Activated CD4-positive, alpha-beta memory T cell treated with anti-CD3 and anti-CD28 coated beads for 36 hours (primary cell): ENCODE measurements at regions of chr4 and their contacts with region 1.

Region 1: GRCh38 chr4:119041951-119042560 is 93.6 kb upstream of the MYOZ2 start:
- DNase-seq: peak; percentile 63
- H3K4me3 Mint-ChIP-seq: no peak overlapping the region
- H3K27ac Mint-ChIP-seq: no peak overlapping the region
- H3K4me1 Mint-ChIP-seq: peaks cover 11% of the 10 kb centered on the region
- H3K27me3 Mint-ChIP-seq: peaks cover 2% of the 10 kb centered on the region

Region 2: DNA sequence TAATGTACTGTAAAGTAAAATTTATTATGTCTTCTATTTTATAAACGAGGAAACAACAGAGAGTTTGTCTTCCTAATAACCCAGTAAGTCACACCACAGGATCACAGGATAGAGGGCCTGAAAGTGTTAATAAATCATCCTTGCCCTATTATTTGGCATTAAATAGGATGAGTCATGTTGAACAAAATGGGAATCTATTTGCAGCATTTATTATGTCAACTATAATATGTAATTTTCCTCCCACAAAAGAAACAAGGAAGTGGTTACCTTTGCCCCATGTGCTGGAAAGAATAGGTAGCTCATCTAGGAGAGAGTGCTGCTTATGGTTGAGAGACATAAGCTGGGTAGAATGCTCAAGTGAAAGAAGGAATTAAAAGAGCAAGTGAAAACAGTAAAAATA is 1245.4 kb before region 1 on chr4:
- CTCF ChIA-PET with region 1: no interaction called
- POLR2A ChIA-PET with region 1: no interaction called
- intact Hi-C with region 1: no loop called
- DNase-seq: no peak
- H3K4me3 Mint-ChIP-seq: no peak overlapping the region
- H3K27ac Mint-ChIP-seq: no peak overlapping the region
- H3K4me1 Mint-ChIP-seq: no peaks in the 10 kb centered on the region
- H3K27me3 Mint-ChIP-seq: no peaks in the 10 kb centered on the region

Region 3: DNA sequence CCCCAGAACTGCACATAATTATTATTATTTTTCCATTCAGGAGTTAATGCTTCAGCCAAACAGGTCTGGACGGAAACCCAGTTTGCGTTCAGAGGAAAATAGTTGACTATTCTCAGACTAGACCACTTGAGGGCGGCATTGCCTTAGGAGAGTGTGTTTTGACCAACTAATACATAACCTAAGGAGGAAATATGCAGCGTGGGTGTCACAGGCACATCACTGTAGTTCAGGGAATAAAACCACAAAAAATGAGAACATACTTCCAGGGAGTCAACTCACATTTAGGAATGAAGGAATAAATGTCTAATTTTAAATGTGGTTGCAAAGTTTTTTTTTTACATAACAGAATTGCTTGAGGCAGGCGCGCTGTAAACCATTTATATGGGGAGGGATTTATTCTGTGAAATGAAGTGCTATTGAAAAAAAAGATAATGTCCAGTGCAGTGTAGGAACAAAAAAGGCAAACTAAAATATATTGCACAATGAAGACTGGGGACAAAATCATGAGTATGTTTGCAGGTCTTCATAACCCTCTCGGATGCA is 60.1 kb before region 1 on chr4:
- CTCF ChIA-PET with region 1: interaction called, 11 read pairs
- POLR2A ChIA-PET with region 1: no interaction called
- intact Hi-C with region 1: loop called (anchors 1 kb)
- DNase-seq: peak; percentile 55
- H3K4me3 Mint-ChIP-seq: no peak overlapping the region
- H3K27ac Mint-ChIP-seq: no peak overlapping the region
- H3K4me1 Mint-ChIP-seq: peaks cover 1% of the 10 kb centered on the region
- H3K27me3 Mint-ChIP-seq: peaks cover 2% of the 10 kb centered on the region

Region 4: DNA sequence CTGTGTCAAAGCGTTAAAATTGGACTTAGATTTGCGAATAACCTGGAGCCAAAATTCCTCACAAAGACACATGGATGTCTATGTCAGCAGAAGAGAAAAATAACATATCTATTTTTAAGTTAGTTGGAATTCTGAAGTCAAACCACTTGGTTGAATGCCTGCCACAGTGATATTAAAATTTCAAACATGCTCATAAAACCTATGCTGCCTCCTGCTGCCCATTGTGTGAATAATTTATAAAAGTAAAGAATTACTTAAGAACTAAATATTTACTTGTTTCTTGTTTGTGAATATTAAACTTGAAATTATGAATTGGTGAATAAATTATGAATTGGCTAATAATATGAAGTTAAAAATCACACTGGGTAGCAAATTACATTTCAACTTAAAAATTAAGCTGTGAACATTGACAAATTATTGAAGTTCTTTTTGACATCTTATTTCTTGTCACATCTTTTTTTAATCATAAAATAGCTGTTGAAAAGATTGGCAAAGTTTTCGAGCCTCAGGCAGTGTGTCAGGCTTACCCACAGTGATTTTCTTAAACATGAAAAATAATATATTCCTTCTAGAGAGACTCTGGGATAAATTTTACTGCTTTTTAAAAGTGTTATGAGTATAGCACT is 244.4 kb after region 1 on chr4:
- CTCF ChIA-PET with region 1: interaction called, 56 read pairs
- POLR2A ChIA-PET with region 1: no interaction called
- intact Hi-C with region 1: loop called (anchors 1 kb)
- DNase-seq: peak; percentile 22
- H3K4me3 Mint-ChIP-seq: no peak overlapping the region
- H3K27ac Mint-ChIP-seq: no peak overlapping the region
- H3K4me1 Mint-ChIP-seq: peaks cover 16% of the 10 kb centered on the region
- H3K27me3 Mint-ChIP-seq: no peaks in the 10 kb centered on the region